Colonic mucosa (tissue), 4 donors: ENCODE measurements at regions of chrX and their contacts with region 1.

Region 1: DNA sequence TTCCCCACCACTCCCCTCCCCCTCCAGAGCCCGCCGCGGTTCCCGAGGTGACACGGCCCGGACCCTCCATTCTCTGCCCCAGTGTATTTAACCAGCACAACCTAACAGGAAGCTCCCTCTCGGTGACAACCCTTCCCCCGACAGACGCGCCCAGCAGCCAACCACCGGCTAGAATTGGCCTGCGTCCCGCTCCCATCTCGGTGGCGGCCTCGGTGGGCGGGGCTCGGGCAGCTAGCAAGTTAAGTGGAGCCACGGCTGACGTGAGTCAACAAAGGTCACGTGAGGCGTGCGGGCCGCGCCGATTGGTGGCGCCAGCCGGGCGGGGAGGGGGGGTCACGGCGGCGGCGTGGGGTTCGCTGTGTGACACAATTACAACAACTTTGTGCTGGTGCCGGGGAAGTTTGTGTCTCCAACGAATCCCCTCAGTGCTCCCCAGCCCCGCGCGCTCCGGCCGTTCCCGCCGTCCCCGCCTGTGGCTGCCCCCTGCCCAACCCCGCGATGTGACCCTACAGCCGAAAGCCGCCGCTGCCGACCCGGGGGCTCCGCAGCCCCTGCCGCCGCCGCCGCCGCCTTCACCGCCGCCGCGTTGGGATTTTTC is at the start of gene KDM6A:
- DNase-seq: peak; percentile 100
- H3K4me3 ChIP-seq: peak within 1 kb of the TSS; percentile 93
- H3K27ac ChIP-seq: peak within 1 kb of the TSS; percentile 99
- H3K4me1 ChIP-seq: peaks cover 9% of the 10 kb centered on the region
- H3K27me3 ChIP-seq: no peaks in the 10 kb centered on the region
- CTCF ChIP-seq: no peak
- total RNA-seq, gene KDM6A: 31.6 to 45.3 TPM

Region 2: DNA sequence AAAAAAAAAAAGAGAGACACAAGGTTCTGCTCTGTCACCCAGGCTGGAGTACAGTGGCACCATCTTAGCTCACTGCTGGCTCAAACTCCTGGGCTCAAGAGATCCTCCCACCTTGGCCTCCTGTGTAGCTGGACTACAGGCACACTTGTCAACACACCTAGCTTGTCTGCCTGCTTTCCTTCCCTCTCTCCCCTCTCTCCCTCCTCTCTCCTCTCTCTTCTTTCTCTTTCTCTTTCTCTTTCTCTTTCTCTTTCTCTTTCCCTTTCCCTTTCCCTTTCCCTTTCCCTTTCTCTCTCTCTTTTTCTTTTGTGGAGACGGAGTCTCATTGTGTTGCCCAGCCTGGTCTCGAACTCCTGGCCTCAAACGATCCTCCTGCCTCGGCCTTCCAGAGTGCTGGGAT is 195.7 kb after region 1 on chrX:
- intact Hi-C with region 1: loop called (anchors 10 kb)
- DNase-seq: no peak
- H3K4me3 ChIP-seq: no peak overlapping the region
- H3K27ac ChIP-seq: no peak overlapping the region
- H3K4me1 ChIP-seq: no peaks in the 10 kb centered on the region
- H3K27me3 ChIP-seq: no peaks in the 10 kb centered on the region
- CTCF ChIP-seq: no peak